Heart right ventricle (tissue), 16 donors: ENCODE measurements at regions of chr22 and their contacts with region 1.

Region 1: GRCh38 chr22:26447584-26448329 is 18.7 kb downstream of the ASPHD2 start:
- DNase-seq: no peak
- ATAC-seq: no peak
- H3K4me3 ChIP-seq: no peak overlapping the region
- H3K27ac ChIP-seq: no peak overlapping the region
- H3K4me1 ChIP-seq: peaks cover 0 to 9% (median 0%) of the 10 kb centered on the region in 9 donors
- H3K27me3 ChIP-seq: no peaks in the 10 kb centered on the region
- CTCF ChIP-seq: no peak

Region 2: GRCh38 chr22:26404851-26405421 is 42.8 kb before region 1 on chr22:
- intact Hi-C with region 1: loop called in 1 of 10 experiments (anchors 10 kb)
- DNase-seq: no peak
- ATAC-seq: peak in 2 of 8 donors; percentile 30 to 50
- H3K4me3 ChIP-seq: no peak overlapping the region
- H3K27ac ChIP-seq: no peak overlapping the region
- H3K4me1 ChIP-seq: peaks cover 0 to 15% (median 0%) of the 10 kb centered on the region in 9 donors
- H3K27me3 ChIP-seq: peaks cover 0 to 57% (median 25%) of the 10 kb centered on the region in 7 donors
- CTCF ChIP-seq: no peak

Region 3: GRCh38 chr22:26431261-26431995 is 16.3 kb before region 1 on chr22:
- intact Hi-C with region 1: loop called in 1 of 10 experiments (anchors 1 kb)
- DNase-seq: no peak
- ATAC-seq: no peak
- H3K4me3 ChIP-seq: no peak overlapping the region
- H3K27ac ChIP-seq: no peak overlapping the region
- H3K4me1 ChIP-seq: peaks cover 0 to 46% (median 0%) of the 10 kb centered on the region in 9 donors
- H3K27me3 ChIP-seq: peaks cover 0 to 38% (median 17%) of the 10 kb centered on the region in 7 donors
- CTCF ChIP-seq: no peak